Right ventricle myocardium inferior (tissue), 1 donor: ENCODE measurements at regions of chr12 and their contacts with region 1.

Region 1: DNA sequence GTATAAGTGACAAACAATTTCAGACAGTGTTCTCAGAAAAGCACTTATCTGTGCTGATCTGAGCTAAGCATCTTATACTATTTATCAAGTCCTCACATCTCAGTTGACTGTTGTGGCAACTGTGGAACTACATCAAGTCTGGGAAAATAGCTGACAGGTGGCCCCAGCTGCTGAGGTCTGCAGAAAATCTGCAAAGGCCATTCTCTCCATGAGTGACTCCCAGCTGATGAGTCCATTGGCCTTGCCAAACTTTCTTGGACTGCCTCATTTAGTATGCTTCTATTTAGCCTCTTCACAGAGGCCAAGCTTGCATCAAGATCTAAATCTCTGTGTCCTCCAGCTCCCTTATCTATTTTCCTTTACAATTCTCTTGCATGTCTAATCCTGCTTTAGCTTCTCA is 174.5 kb upstream of the RBM19 start:
- DNase-seq: no peak
- ATAC-seq: no peak

Region 2: GRCh38 chr12:113955109-113955970 is 185.2 kb before region 1 on chr12:
- intact Hi-C with region 1: no loop called
- DNase-seq: no peak
- ATAC-seq: no peak

Region 3: DNA sequence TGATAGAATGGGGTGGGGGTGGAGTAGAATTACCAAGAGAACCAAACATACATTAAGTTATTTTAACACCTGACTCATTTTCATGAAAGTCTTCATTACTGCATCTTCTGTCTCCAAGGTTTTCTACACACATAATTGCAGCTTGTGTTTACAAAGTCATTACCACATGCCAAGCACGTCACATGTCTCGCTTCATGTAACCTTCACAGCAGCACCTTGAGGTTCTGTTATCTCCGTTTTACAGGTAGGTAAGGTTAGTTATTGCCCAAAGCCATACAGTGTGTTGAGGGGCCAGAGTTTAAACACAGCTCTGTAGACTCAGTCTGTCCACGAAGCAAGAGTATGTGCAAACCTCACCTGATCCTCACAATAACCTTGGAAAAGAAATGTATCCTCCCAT is 110.1 kb before region 1 on chr12:
- intact Hi-C with region 1: loop called (anchors 10 kb)
- DNase-seq: no peak
- ATAC-seq: no peak

Region 4: DNA sequence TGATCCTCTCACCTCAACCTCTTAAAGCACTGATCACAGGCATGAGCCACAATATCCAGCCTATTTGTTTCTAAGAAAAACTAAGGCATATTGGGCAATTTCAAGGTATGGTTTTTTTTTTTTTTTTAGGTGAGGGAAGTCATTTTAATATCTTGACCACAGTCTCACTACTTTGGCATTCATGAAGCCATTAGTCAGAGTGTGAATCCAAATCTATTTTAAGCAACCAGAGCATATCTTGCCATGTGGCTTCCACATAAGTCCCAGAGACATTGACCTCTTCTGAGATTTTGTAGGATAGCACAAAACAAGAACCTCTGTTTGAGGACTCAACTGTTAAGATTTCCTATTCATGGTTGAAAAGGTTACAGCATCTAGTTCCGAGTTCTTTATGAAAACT is 44.1 kb before region 1 on chr12:
- intact Hi-C with region 1: no loop called
- DNase-seq: no peak
- ATAC-seq: no peak

Region 5: DNA sequence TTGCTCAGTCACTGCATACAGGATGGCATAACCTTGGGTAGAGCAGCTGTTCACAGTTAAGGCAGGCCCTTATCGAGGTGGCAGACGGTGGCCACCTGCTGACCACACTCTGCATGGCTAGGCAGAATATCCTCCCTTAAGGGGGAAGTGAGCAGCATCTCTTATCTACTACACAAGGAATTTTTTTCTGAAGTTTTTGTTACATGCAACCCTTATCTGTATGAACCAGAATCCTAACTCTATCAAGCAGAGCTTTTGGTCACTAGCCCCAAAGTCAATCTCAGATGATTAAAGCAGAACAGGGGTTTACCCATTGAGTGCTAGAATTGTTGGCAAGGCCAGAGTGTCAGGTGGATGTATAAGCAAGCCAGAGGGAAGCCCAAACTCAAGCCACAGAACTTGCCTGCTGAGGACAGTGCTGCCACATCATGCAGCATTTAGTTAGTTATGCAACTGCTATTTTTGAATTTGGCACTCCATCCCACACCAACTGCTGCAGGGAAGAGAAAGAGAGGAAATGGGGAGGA is 72.5 kb after region 1 on chr12:
- intact Hi-C with region 1: no loop called
- DNase-seq: no peak
- ATAC-seq: peak; percentile 88

Region 6: DNA sequence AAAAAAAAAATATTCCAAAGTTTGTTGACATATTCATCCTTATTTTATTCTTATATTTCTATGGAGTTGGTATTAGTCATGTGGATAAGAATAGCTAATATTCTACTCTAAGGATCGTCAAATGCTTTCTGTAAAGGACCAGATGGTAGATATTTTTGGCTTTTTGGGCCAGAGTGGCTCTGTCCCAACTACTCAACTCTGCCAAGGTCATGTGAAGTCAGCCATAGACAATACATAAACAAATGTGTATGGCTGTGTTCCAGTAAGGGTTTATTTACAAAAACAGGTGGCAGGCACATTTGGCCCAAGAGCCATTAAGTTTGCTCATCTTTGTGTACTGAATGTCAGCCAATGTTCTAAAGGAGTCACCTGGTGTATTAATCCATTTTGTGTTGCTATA is 133.6 kb after region 1 on chr12:
- intact Hi-C with region 1: no loop called
- DNase-seq: no peak
- ATAC-seq: no peak